K562 (cell line): ENCODE measurements at regions of chr11 and their contacts with region 1.

Region 1: DNA sequence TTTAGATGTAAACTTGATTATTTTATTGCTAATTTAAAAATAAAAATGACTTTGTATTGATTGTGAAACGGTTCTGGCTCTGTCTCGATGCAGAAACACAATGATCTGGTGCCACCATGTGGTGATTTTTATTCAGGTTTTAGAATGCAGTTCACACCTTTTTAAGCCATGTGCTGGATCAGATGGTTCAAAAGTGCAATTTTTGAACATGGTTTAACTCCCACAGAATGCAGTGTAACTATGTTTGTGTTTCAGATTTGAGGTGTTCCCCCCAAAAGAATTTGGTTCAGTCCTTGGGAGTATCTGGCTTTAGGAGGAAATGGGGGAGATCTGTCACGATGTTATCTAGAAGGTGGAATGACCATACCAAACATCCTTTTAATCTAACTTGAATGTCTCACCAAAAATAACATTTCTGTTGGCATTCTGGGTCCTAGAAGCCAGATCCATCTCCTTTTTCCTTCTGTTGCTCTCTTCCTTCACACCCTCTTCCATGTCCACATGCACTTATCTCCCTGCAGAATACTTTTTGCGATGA is 7.9 kb downstream of the MRPL16 start:
- DNase-seq: peak; percentile 39 to 74 (median 54)
- ATAC-seq: peak; percentile 61
- H3K4me3 ChIP-seq: no peak overlapping the region
- H3K27ac ChIP-seq: no peak overlapping the region
- H3K4me1 ChIP-seq: no peaks in the 10 kb centered on the region; a peak in 1 of 5 replicates
- H3K27me3 ChIP-seq: no peaks in the 10 kb centered on the region
- CTCF ChIP-seq: peak; percentile 63 to 88 (median 63)
- EP300 ChIP-seq: no peak
- POLR2A ChIP-seq: no peak
- RAD21 ChIP-seq: peak; percentile 85 to 86

Region 2: DNA sequence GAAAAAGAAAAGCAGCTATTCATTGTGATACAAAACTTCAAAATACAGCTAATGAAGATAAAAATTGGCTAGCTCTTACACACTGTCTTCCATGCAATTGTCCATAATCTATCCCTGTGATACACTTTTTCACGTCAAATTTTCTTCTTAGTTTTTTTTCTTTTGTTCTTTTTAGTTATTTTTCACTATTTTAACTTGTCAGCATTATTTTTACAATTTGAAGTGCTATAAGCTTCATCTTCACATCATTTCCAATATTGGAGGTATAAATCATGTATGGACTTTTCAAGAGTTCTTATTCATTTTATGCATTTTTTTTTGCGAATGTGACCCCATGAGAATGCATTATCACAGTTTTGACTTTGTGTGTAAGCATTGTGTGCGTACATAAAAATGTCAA is 1448.0 kb before region 1 on chr11:
- CTCF ChIA-PET with region 1: no interaction called
- POLR2A ChIA-PET with region 1: no interaction called
- in situ Hi-C with region 1: no loop called
- intact Hi-C with region 1: no loop called
- DNase-seq: no peak
- ATAC-seq: no peak
- H3K4me3 ChIP-seq: no peak overlapping the region
- H3K27ac ChIP-seq: no peak overlapping the region
- H3K4me1 ChIP-seq: no peaks in the 10 kb centered on the region
- H3K27me3 ChIP-seq: no peaks in the 10 kb centered on the region
- CTCF ChIP-seq: no peak
- EP300 ChIP-seq: no peak
- POLR2A ChIP-seq: no peak
- RAD21 ChIP-seq: no peak

Region 3: DNA sequence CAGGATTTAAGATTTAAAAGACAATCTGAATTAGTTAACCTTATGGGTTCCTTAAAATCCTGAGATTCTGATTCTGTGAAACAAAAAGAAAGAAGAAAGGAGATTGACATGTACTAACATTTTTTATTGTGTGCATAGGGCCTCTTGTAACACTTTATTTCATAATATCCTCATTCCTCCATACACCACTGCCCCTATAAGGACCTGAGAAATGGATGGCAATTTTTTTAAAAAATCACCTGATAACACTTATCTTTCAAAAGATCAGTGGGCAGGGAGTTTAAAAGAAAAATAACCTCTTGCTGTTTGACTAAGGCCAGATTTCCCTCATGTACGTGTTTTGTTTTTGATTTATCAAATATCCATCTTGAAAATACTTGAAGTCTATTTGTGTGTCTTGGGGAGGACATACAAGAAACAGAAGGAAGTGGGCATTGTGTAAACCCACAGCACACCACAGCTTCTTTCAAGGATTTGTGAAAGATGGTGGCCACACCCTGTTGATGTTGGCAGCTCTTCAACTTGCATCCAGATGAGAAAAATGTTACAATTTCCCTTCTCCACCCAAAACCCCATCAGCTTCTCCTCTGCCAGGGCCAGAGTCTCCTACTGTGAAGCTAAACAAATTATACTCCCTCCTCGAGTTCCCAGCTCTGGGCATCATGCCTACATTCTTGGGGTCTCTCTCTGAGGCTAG is 555.0 kb before region 1 on chr11:
- CTCF ChIA-PET with region 1: no interaction called
- POLR2A ChIA-PET with region 1: no interaction called
- in situ Hi-C with region 1: no loop called
- intact Hi-C with region 1: no loop called
- DNase-seq: no peak
- ATAC-seq: no peak
- H3K4me3 ChIP-seq: no peak overlapping the region
- H3K27ac ChIP-seq: no peak overlapping the region
- H3K4me1 ChIP-seq: no peaks in the 10 kb centered on the region
- H3K27me3 ChIP-seq: peaks cover 0 to 3% of the 10 kb centered on the region in 2 experiments; a peak in 2 of 5 replicates
- CTCF ChIP-seq: no peak
- EP300 ChIP-seq: no peak
- POLR2A ChIP-seq: no peak
- RAD21 ChIP-seq: no peak

Region 4: GRCh38 chr11:59534676-59535075 is 268.0 kb before region 1 on chr11:
- CTCF ChIA-PET with region 1: interaction called, 12 read pairs
- POLR2A ChIA-PET with region 1: no interaction called
- in situ Hi-C with region 1: no loop called
- intact Hi-C with region 1: loop called (anchors 5 kb)
- DNase-seq: no peak
- ATAC-seq: no peak
- H3K4me3 ChIP-seq: no peak overlapping the region
- H3K27ac ChIP-seq: no peak overlapping the region
- H3K4me1 ChIP-seq: peaks cover 6% of the 10 kb centered on the region in 2 experiments; a peak in 3 of 5 replicates
- H3K27me3 ChIP-seq: no peaks in the 10 kb centered on the region
- CTCF ChIP-seq: no peak
- EP300 ChIP-seq: no peak
- POLR2A ChIP-seq: no peak
- RAD21 ChIP-seq: no peak

Region 5: DNA sequence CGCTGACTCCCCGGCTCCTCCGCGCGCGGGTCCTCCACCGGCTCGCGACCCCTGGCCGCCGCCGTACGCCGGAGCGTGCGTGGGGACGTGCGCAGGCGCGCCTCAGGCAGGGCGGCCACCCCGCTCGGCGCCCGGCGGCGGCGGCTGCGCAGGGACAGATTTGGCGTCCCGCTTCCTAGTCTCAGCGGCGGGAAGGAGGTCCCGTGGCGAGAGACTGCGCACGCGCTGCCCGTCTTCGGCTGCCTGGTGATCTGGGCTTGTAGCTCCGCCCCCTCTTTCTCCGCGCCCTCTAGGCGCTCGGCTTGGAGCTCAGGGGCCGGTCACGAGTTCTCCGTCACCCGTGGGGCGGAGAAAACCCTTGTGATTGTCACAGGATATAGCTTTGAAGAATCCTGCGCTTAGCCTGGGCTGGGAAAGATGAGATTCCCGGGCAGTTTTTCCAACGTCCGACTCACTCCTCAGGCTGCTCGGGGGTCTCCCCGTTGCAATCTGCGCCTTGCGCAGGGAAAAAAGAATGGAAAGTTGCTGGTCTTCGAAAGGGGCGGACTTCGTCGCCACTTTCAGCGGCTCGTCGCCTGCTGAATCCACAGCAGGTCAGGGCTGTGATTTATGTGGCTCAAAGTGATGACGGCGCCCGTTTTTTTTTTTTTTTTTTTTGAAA is 133.6 kb before region 1 on chr11 and contains the start of gene PATL1:
- CTCF ChIA-PET with region 1: no interaction called
- POLR2A ChIA-PET with region 1: no interaction called
- in situ Hi-C with region 1: no loop called
- intact Hi-C with region 1: loop called (anchors 5 kb)
- DNase-seq: peak; percentile 98 to 99 (median 98)
- ATAC-seq: peak; percentile 95
- H3K4me3 ChIP-seq: peak within 1 kb of the TSS; percentile 82
- H3K27ac ChIP-seq: peak within 1 kb of the TSS; percentile 92
- H3K4me1 ChIP-seq: peaks cover 11 to 14% of the 10 kb centered on the region in 2 experiments; a peak in 3 of 5 replicates
- H3K27me3 ChIP-seq: no peaks in the 10 kb centered on the region
- CTCF ChIP-seq: no peak
- EP300 ChIP-seq: no peak
- POLR2A ChIP-seq: peak; percentile 75
- RAD21 ChIP-seq: no peak
- polyA plus RNA-seq, gene PATL1: 3.2 to 5.0 TPM

Region 6: DNA sequence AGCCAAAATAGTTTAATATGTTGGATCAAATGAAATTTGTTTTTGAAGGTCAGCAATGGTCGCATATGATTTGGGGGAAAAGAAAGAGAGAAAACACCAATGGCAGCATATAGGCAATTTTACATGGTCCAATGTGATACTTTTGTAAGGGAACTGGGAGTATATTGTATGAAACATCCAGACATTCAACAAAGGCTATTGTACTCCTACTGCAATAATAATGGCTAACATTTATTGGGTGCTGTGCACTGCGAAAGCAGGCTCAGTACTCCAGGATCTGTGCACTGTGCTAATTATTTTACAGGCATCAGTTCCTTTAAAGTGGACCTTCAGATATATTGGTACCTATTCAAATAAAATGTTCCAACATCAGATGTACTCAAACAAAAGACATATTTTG is 83.2 kb before region 1 on chr11:
- CTCF ChIA-PET with region 1: no interaction called
- POLR2A ChIA-PET with region 1: no interaction called
- in situ Hi-C with region 1: no loop called
- intact Hi-C with region 1: no loop called
- DNase-seq: no peak
- ATAC-seq: no peak
- H3K4me3 ChIP-seq: no peak overlapping the region
- H3K27ac ChIP-seq: no peak overlapping the region
- H3K4me1 ChIP-seq: peaks cover 0 to 10% of the 10 kb centered on the region in 2 experiments; a peak in 2 of 5 replicates
- H3K27me3 ChIP-seq: no peaks in the 10 kb centered on the region; a peak in 1 of 5 replicates
- CTCF ChIP-seq: no peak
- EP300 ChIP-seq: no peak
- POLR2A ChIP-seq: no peak
- RAD21 ChIP-seq: no peak